Prostate gland (tissue), 2 donors: ENCODE measurements at regions of chr18 and their contacts with region 1.

Region 1: GRCh38 chr18:36372903-36373311 is 75.4 kb downstream of the FHOD3 start:
- DNase-seq: no peak
- H3K4me3 ChIP-seq: no peak overlapping the region
- H3K27ac ChIP-seq: no peak overlapping the region
- H3K4me1 ChIP-seq: no peaks in the 10 kb centered on the region
- H3K27me3 ChIP-seq: no peaks in the 10 kb centered on the region
- CTCF ChIP-seq: no peak
- POLR2A ChIP-seq: no peak

Region 2: DNA sequence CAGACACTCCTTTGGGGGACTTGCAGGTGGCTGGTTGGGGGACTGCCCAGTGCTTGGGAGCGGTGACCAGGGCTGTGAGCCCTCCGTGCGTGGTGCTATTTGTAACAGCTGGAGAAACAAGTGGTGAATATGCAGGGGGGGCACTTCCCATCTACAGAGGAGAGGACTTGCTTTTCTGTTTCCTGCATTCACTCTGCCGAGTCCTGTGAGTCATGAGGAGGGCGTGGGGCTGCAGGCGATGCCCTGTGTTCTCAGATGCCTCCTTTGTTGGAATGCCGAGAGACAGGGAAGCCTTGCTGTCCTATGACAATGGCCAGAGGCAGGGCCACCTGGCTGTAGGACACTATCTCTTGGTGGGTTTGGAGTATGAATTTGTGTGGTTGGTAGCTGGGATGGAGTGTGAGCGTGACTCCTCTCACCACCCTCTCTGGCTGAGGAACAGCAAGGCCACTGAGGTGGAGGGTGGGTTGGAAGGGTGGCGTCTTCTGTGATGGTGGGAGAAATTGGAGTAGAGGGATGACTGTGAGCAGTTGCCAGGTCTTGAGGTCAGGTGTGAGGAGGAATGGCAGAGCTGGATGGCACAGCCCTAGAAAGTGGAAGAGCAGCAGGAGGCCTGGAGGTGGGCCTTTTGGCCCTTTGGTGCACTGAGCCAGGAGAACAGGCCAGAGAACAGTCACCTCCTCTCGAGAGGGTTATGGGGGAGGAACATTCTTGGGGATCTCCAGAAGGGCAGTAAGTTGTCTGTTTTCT is 51.1 kb before region 1 on chr18:
- intact Hi-C with region 1: no loop called
- DNase-seq: no peak
- H3K4me3 ChIP-seq: no peak overlapping the region
- H3K27ac ChIP-seq: no peak overlapping the region
- H3K4me1 ChIP-seq: no peaks in the 10 kb centered on the region
- H3K27me3 ChIP-seq: no peaks in the 10 kb centered on the region
- CTCF ChIP-seq: no peak
- POLR2A ChIP-seq: no peak

Region 3: DNA sequence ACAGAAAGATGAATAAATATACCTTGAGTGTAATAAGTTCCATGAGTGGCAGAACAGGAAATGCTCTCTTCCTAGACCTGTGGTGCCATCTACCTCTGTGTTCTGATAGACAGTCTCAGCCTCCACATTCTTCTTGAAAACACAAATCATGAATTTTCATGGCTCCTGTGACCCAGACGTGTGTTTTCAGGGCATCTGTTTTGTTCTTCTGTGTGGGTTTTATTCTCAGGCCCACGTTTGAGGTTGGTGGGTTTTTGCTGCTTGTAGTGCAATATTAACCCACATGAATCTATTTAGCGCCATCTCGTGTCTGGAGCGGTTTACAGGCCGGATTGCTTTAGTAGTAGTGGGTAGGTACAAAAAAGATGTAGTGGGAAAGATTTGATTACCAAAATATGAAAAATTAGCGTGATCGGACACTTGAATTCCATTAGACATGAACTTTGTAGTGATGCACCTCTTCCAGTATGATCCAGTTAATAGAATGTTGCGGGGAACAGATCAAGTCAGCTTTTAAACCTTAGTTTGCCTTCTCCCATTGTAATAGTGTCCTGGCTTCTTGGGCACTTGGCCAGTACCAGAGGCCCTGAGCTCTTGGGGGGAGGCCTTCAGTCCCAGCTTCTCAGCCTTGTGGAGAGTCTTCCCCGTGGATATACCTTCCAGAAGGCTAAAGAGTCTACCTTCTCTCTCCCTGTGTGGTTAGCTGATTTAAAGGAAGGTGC is 199.4 kb after region 1 on chr18:
- intact Hi-C with region 1: loop called (anchors 10 kb)
- DNase-seq: peak; percentile 40
- H3K4me3 ChIP-seq: no peak overlapping the region
- H3K27ac ChIP-seq: no peak overlapping the region
- H3K4me1 ChIP-seq: no peaks in the 10 kb centered on the region
- H3K27me3 ChIP-seq: no peaks in the 10 kb centered on the region
- CTCF ChIP-seq: peak in 3 of 4 experiments; percentile 46 to 56 (median 52)
- POLR2A ChIP-seq: no peak